PC-9 (cell line): ENCODE measurements at regions of chr11 and their contacts with region 1.

Region 1: DNA sequence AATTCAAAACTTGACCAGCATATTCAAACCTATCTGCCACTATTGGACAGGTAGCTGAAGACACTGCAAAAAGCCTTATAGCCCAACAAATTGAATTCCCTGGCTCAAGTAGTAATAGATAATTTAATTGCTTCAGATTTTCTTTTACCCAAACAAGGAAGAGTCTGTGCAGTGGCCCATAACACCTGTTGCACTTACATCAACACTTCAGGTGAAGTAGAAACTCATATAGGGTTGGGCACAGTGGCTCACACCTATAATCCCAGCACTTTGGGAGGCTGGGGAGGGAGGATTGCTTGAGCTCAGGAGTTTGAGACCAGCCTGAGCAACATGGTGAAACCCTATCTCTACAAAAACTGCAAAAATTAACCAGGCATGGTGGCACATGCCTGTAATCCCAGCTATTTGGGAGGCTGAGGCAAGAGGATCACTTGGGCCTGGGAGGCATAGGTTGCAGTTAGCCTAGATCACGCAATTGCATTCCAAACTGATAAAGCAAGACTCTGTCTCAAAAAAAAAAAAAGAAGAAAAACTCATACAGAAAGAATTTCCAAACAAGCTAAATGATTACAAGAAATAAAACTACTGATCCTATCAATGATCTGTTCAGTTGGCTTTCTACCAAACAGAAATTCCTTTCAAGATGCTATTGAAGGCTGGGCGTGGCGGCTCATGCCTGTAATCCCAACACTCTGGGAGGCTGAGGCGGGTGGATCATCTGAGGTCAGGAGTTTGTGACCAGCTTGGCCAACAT is 9.5 kb downstream of the FOLR3 start:
- DNase-seq: peak; percentile 63 to 89
- H3K4me3 ChIP-seq: no peak overlapping the region
- H3K27ac ChIP-seq: peak overlapping the region; percentile 50
- H3K4me1 ChIP-seq: peaks cover 6% of the 10 kb centered on the region; the same call in 1 of the 2 replicates
- H3K27me3 ChIP-seq: no peaks in the 10 kb centered on the region
- CTCF ChIP-seq: no peak

Region 2: DNA sequence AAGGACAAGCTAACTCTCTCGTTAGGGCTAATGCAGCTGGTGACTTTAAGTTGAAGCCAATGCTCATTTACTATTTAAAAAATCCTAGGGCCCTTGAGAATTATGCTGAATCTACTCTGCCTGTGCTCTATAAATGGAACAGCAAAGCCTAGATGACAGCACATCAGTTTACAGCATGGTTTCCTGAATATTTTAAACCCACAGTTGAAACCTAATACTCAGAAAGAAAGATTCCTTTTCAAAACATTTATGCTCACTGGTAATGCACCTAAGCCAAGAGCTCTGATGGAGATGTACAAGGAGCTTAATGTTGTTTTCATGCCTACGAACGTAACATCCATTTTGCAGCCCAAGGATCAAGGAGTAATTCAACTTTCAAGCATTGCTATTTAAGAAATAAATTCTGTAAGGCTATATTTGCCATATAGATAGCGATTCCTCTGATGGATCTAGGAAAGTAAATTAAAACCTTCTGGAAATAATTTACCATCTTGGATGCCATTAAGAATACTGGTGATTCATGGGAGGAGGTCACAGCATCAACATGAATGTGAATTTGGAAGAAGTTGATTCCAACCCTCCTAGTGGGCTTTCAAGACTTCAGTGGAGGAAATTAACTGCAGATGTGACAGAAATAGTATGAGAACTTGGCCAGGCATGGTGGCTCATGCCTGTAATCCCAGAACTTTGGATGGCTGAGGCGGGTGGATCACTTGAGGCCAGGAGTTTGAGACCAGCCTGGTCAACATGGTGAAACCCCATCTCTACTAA is 231.0 kb before region 1 on chr11:
- CTCF ChIA-PET with region 1: interaction called, 21 read pairs
- POLR2A ChIA-PET with region 1: no interaction called
- intact Hi-C with region 1: no loop called
- DNase-seq: no peak
- H3K4me3 ChIP-seq: no peak overlapping the region
- H3K27ac ChIP-seq: no peak overlapping the region
- H3K4me1 ChIP-seq: peaks cover 11% of the 10 kb centered on the region
- H3K27me3 ChIP-seq: no peaks in the 10 kb centered on the region
- CTCF ChIP-seq: no peak